ENCODE measurements at regions of chr3 and their contacts with region 1.

Region 1: DNA sequence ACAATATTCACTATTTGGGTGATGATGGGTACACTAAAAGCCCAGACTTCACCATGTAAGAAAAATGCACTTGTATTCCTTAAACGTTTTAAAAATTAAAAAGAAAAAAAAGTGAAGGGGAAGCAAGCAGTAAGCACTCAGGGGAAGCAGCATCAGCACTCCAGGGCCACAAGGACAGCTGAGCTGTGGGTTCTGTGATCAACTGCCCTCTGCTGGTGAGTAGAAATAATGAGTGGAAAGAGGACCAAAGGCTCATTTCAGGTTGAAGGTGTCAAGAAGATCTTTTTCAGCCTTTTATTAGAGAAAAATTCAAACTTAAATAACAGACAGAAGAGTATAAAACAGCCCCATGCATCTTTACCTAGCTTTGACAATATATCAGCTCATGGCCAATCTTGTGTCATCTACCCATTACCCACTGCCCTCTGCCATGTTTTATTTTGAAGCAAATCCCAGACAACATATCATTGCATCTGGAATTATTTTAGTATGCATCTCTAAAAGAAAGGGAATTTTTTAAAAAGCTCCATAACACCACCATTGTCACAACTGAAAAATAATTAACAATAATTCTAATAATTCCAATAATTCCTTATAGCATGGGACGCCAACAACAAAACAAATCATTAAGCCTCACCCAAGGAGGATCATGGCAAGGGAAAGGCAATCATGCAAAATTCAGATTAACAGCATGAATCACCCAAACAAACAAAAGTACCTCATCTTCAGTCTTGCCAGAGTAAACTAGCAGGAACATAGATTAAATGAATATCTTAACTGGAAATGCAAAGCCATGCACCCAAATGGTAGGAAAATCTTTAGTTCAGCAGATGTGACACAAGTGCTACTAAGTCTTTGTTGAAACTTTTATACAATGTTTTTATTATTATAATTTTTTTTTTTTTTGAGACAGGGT is 42.5 kb downstream of the TAMM41 start:
- DNase-seq: peak; percentile 51
- ATAC-seq: peak; percentile 86
- H3K4me3 ChIP-seq: no peak overlapping the region
- H3K27ac ChIP-seq: no peak overlapping the region
- H3K4me1 ChIP-seq: no peaks in the 10 kb centered on the region
- H3K27me3 ChIP-seq: no peaks in the 10 kb centered on the region
- CTCF ChIP-seq: peak; percentile 78
- EP300 ChIP-seq: no peak
- POLR2A ChIP-seq: no peak
- RAD21 ChIP-seq: peak; percentile 48; the same call in 1 of the 2 replicates

Region 2: GRCh38 chr3:11379233-11379823 is 424.9 kb before region 1 on chr3:
- CTCF ChIA-PET with region 1: interaction called, 11 read pairs
- POLR2A ChIA-PET with region 1: no interaction called
- in situ Hi-C with region 1: loop called (anchors 10 kb)
- intact Hi-C with region 1: loop called (anchors 1 kb)
- DNase-seq: peak; percentile 24
- ATAC-seq: peak; percentile 59; the same call in 2 of the 3 replicates
- H3K4me3 ChIP-seq: no peak overlapping the region
- H3K27ac ChIP-seq: no peak overlapping the region
- H3K4me1 ChIP-seq: peaks cover 15% of the 10 kb centered on the region
- H3K27me3 ChIP-seq: no peaks in the 10 kb centered on the region
- CTCF ChIP-seq: peak; percentile 72
- EP300 ChIP-seq: no peak
- POLR2A ChIP-seq: no peak
- RAD21 ChIP-seq: peak; percentile 52; the same call in 1 of the 2 replicates

Region 3: DNA sequence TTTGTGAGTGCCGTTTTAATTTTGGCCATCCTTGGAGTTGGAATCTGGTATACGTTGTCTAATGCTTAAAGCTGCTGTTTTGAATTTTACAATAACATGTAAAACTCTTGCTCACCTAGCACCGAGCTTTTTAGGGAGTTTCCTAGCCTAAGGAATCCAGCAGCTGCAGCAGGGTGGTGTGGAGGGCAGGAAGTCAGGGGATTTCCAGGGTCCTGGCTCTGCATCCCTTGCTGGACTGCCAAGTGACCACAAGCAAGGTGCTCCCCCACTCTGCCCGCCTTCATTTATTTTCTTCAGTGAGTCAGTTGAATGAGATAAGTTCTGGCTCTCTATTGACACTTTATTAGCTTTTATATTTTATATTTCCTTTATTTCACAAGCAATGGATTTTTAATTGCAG is 418.3 kb before region 1 on chr3:
- CTCF ChIA-PET with region 1: interaction called, 3 read pairs
- POLR2A ChIA-PET with region 1: no interaction called
- in situ Hi-C with region 1: loop called (anchors 10 kb)
- intact Hi-C with region 1: no loop called
- DNase-seq: no peak
- ATAC-seq: no peak
- H3K4me3 ChIP-seq: no peak overlapping the region
- H3K27ac ChIP-seq: no peak overlapping the region
- H3K4me1 ChIP-seq: peaks cover 7% of the 10 kb centered on the region
- H3K27me3 ChIP-seq: no peaks in the 10 kb centered on the region
- CTCF ChIP-seq: no peak
- EP300 ChIP-seq: no peak
- POLR2A ChIP-seq: no peak
- RAD21 ChIP-seq: no peak

Region 4: DNA sequence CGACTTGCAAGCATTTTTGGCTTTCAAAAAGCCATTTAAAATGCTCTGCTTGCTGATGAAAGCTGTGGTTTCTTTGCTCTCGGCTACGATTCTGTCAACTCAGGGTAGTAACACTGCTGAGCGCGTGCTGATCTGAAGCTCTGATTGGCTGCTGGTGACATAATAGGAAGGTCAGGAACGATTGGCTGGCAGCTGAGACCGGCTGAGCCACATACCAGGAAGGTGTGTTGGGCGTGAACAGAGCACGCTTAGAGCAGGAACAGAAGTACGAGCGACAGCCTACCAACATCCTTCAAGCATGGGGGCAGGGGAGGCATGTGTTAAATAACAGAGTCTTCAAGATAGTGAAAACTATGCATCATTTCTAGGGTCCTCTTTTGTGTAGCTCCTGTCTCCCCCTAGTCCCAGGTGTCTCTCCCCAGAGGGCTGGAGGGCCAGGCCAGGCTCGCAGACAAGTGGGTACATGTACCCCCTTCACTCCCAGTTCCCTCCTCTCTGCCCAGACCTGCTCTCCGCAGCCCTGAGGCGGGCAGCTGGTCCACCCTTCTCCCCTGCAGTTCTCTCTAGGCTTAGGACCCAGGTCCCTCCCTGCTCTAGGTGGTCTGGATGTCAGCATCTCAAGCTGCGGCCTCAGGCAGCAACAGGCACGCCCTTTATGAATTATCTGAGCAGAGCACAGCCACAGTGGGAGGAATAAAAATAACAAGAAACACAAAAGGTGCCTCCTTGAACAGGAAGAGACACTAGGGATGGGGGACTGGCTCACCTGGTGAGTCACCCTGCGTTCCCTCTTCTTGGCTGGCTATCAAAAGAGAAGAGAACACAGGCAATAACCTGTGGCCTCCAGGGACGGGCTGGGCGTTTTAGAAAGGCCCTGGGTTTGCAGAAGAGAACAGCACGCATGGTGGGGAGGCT is 33.5 kb before region 1 on chr3:
- CTCF ChIA-PET with region 1: no interaction called
- POLR2A ChIA-PET with region 1: no interaction called
- in situ Hi-C with region 1: no loop called
- intact Hi-C with region 1: loop called (anchors 1 kb)
- DNase-seq: peak; percentile 83
- ATAC-seq: peak; percentile 95
- H3K4me3 ChIP-seq: peak overlapping the region in 2 of 3 experiments; percentile 24 to 64; a peak in 4 of 6 replicates
- H3K27ac ChIP-seq: no peak overlapping the region
- H3K4me1 ChIP-seq: peaks cover 31% of the 10 kb centered on the region
- H3K27me3 ChIP-seq: no peaks in the 10 kb centered on the region
- CTCF ChIP-seq: no peak
- EP300 ChIP-seq: no peak
- POLR2A ChIP-seq: 0 out of 4 replicates have a peak, but pooled peaks of 1 of the 2 experiments have one; percentile 44
- RAD21 ChIP-seq: no peak

Measured in HepG2 (cell line).